IMR-90 (cell line): ENCODE measurements at regions of chr1 and their contacts with region 1.

Region 1: GRCh38 chr1:204128964-204129896 is 22.6 kb downstream of the ETNK2 start:
- DNase-seq: peak; percentile 61
- ATAC-seq: peak; percentile 73
- H3K4me3 ChIP-seq: no peak overlapping the region
- H3K27ac ChIP-seq: no peak overlapping the region
- H3K4me1 ChIP-seq: peaks cover 19% of the 10 kb centered on the region
- H3K27me3 ChIP-seq: no peaks in the 10 kb centered on the region
- CTCF ChIP-seq: peak; percentile 80
- POLR2A ChIP-seq: 0 out of 2 replicates have a peak, but pooled peaks have one; percentile 25
- RAD21 ChIP-seq: peak; percentile 82

Region 2: DNA sequence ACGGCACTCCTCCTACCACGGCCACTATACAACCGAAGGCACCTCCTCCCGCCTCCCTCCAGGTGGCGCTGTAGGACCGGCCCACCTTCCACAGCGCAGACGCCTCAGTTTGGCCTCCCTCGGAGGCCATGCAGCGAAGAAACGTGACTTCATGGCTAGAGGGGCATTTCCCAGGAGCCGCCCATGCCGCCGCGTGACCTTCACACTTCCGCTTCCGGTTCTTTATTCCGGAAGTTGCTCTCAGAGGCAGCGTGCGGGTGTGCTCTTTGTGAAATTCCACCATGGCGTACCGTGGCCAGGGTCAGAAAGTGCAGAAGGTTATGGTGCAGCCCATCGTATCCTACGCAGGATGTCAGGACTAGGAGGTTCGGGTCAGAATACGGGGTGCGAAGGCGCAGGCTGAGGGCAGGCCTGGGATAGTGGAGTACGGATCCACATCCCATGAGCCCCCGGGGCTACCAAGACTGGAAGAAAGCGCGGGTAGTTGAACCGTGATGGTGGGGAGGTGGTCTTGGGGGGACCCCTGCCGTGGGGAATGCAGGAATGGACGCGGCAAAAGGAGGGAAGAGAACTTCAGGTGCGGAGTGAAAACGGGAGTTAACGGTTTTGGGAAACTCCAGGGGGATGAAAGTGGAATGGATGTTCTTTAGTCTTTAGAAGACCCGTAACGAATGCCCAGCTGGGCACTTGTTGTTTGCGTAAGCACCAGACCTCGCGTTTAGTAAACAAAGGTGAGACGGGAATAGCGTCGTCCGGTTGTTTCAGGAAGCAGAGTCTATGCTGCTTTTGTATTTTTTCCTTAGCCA is 267.6 kb before region 1 on chr1 and contains the start of gene SNRPE:
- CTCF ChIA-PET with region 1: interaction called, 16 read pairs
- POLR2A ChIA-PET with region 1: interaction called, 6 read pairs
- dilution Hi-C with region 1: loop called (anchors 25 kb)
- in situ Hi-C with region 1: no loop called
- intact Hi-C with region 1: loop called (anchors 2 kb)
- DNase-seq: peak; percentile 98
- ATAC-seq: peak; percentile 96
- H3K4me3 ChIP-seq: peak within 1 kb of the TSS; percentile 75
- H3K27ac ChIP-seq: peak within 1 kb of the TSS; percentile 92
- H3K4me1 ChIP-seq: peaks cover 8% of the 10 kb centered on the region; the same call in 1 of the 2 replicates
- H3K27me3 ChIP-seq: no peaks in the 10 kb centered on the region
- CTCF ChIP-seq: peak; percentile 90
- POLR2A ChIP-seq: peak; percentile 84
- RAD21 ChIP-seq: peak; percentile 95
- total RNA-seq, gene SNRPE: 43.6 and 118 TPM in 2 replicates

Region 3: GRCh38 chr1:203871107-203871875 is 257.9 kb before region 1 on chr1:
- CTCF ChIA-PET with region 1: interaction called, 95 read pairs
- POLR2A ChIA-PET with region 1: interaction called, 3 read pairs
- dilution Hi-C with region 1: loop called (anchors 25 kb)
- in situ Hi-C with region 1: loop called (anchors 5 kb)
- intact Hi-C with region 1: loop called (anchors 1 kb)
- DNase-seq: peak; percentile 80
- ATAC-seq: peak; percentile 96
- H3K4me3 ChIP-seq: no peak overlapping the region
- H3K27ac ChIP-seq: no peak overlapping the region
- H3K4me1 ChIP-seq: no peaks in the 10 kb centered on the region
- H3K27me3 ChIP-seq: no peaks in the 10 kb centered on the region
- CTCF ChIP-seq: peak; percentile 100
- POLR2A ChIP-seq: peak; percentile 46; the same call in 1 of the 2 replicates
- RAD21 ChIP-seq: peak; percentile 98

Region 4: DNA sequence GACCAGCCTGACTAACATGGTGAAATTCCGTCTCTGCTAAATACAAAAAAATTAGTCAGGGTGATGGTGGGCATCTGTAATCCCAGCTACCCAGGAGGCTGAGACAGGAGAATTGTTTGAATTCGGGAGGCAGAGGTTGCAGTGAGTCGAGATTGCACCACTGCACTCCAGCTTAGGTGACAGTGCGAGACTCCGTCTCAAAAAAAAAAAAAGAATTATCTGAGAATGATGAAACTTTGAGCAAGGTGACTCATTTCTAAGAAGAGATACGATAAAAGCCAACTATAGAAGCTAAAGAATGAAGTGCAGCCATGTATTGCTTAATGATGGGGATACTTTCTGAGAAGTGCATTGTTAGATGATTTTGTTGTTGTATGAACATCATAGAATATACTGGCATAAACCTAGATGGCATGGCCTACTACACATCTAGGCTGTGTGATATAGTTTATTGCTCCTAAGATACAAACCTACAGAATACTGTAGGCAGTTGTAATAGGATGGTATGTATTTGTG is 203.1 kb before region 1 on chr1:
- CTCF ChIA-PET with region 1: interaction called, 3 read pairs
- POLR2A ChIA-PET with region 1: no interaction called
- dilution Hi-C with region 1: no loop called
- in situ Hi-C with region 1: no loop called
- intact Hi-C with region 1: loop called (anchors 1 kb)
- DNase-seq: peak; percentile 83
- ATAC-seq: peak; percentile 81
- H3K4me3 ChIP-seq: no peak overlapping the region
- H3K27ac ChIP-seq: peak overlapping the region; percentile 82
- H3K4me1 ChIP-seq: no peaks in the 10 kb centered on the region
- H3K27me3 ChIP-seq: no peaks in the 10 kb centered on the region
- CTCF ChIP-seq: no peak
- POLR2A ChIP-seq: no peak
- RAD21 ChIP-seq: no peak

Region 5: GRCh38 chr1:204072931-204073836 is 56.0 kb before region 1 on chr1 and contains the start of gene SOX13:
- CTCF ChIA-PET with region 1: interaction called, 8 read pairs
- POLR2A ChIA-PET with region 1: no interaction called
- dilution Hi-C with region 1: no loop called
- in situ Hi-C with region 1: no loop called
- intact Hi-C with region 1: loop called (anchors 1 kb)
- DNase-seq: peak; percentile 85
- ATAC-seq: peak; percentile 88
- H3K4me3 ChIP-seq: peak within 1 kb of the TSS; percentile 97
- H3K27ac ChIP-seq: peak within 1 kb of the TSS; percentile 58
- H3K4me1 ChIP-seq: peaks cover 5% of the 10 kb centered on the region
- H3K27me3 ChIP-seq: peaks cover 1% of the 10 kb centered on the region
- CTCF ChIP-seq: peak; percentile 24; the same call in 1 of the 2 replicates
- POLR2A ChIP-seq: peak; percentile 71
- RAD21 ChIP-seq: no peak
- total RNA-seq, gene SOX13: 0.54 and 0.56 TPM in 2 replicates

Region 6: DNA sequence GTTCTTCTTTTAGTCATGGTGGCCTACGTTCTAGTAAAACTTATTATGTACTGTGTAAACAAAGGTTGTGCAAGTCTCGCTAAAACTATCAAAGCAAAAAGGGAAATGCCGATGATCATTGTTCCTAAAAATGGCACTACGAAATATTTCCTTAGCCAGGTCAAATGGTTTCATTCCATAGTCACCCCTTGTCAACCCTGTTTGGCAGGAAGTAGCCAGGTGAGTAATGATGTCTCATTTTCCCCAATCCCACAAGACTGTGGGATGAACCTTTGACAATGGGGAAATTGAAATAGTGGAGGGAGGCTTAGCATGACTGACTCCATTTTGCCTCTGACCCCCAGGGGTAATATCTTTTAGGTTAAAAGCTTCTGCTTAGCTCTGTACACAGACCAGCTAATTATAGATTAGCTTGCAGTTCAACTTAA is 42.5 kb after region 1 on chr1:
- CTCF ChIA-PET with region 1: no interaction called
- POLR2A ChIA-PET with region 1: no interaction called
- dilution Hi-C with region 1: no loop called
- in situ Hi-C with region 1: no loop called
- intact Hi-C with region 1: no loop called
- DNase-seq: peak; percentile 86
- ATAC-seq: no peak; the same call in none of the 2 replicates
- H3K4me3 ChIP-seq: no peak overlapping the region
- H3K27ac ChIP-seq: no peak overlapping the region
- H3K4me1 ChIP-seq: peaks cover 4% of the 10 kb centered on the region; the same call in 1 of the 2 replicates
- H3K27me3 ChIP-seq: no peaks in the 10 kb centered on the region
- CTCF ChIP-seq: no peak
- POLR2A ChIP-seq: no peak
- RAD21 ChIP-seq: no peak